Pancreas (tissue), 10 donors: ENCODE measurements at regions of chr17 and their contacts with region 1.

Region 1: DNA sequence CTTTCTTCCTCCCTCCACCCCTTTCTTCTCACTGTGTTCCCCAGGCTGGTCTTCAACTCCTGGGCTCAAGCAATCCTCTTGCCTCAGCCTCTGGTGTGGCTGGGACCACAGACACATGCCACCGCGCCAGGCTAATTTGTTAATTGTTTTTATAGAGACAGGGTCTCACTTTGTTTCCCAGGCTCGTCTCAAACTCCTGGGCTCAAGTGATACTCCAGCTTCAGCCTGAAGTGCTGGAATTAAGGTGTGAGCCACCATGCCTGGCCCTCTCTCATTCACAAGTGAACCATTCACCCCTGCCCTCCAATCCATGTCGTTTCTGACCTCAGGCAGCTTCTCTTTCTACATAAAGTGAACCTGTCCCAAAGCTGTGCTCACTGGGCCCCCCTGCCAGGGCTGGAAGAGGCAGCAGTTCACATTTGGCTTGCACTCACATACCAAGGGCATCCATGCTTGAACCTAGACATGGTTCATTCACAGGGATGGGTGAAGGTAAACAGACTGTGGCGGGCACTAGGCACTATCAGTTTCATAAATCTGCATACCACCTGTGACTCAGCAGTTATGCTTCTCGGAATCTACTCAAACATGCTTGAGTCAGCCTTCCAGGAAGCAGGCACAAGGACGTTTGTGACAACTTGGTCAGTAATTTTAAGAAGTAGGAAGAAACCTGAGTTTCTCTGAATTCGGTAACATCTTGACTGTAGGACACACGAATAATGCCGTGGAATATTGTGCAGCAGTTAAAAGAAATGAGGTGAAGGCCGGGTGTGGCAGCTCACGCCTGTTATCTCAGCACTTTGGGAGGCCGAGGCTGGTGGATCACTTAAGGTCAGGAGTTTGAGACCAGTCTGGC is 6.0 kb upstream of the RNF213 start:
- DNase-seq: peak in 4 of 6 donors; percentile 28 to 80 (median 62)
- ATAC-seq: peak; percentile 44 to 90 (median 80)
- H3K4me3 ChIP-seq: no peak overlapping the region
- H3K27ac ChIP-seq: peak overlapping the region; percentile 26 to 80 (median 52)
- H3K4me1 ChIP-seq: peaks cover 0 to 19% (median 0%) of the 10 kb centered on the region in 3 donors
- H3K27me3 ChIP-seq: no peaks in the 10 kb centered on the region
- CTCF ChIP-seq: no peak

Region 2: GRCh38 chr17:80082403-80083135 is 172.1 kb before region 1 on chr17:
- intact Hi-C with region 1: loop called in 1 of 3 experiments (anchors 5 kb)
- DNase-seq: peak; percentile 49 to 76 (median 68)
- ATAC-seq: peak; percentile 60 to 94 (median 86)
- H3K4me3 ChIP-seq: no peak overlapping the region
- H3K27ac ChIP-seq: no peak overlapping the region
- H3K4me1 ChIP-seq: peaks cover 0 to 3% (median 0%) of the 10 kb centered on the region in 3 donors
- H3K27me3 ChIP-seq: no peaks in the 10 kb centered on the region
- CTCF ChIP-seq: peak; percentile 65 to 77 (median 70)

Region 3: DNA sequence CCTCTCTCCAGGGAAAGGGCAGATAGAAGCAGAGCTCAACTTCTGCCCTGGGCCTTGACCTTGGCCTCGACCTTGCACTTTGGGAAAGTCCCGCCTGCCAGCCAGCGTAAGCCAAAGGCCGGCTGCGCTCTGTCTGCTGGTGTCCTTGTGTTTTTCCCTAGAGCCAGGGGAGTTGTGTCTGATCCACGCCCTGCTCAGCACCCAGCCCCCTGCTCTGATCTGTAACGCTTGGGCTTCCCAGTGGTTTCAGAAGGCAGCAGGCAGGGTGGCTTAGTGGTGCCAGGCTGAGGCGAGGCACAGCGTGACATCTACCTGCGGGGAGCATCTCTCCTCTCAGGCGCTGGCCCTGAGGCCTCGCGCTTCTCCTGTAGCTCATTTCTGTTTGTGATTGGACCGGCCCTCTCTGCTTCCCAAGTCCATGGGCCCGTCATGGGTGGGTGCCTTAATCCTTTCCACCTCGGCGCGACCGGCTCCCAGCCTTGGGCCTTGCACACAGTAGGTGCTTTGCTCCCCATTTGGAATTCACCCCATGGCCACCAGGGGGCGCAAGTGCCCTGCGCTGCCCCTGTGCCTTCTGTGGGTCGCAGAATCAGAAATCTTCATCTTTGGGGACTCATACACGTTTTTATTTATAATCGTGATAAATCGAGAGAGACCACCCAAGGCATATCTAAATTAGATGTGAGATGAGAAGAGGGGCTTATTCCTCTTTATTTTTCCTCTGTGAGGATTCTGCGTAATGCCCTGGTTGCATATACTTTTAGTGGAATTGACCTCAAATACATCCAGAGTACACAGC is 58.7 kb before region 1 on chr17:
- intact Hi-C with region 1: loop called in 1 of 3 experiments (anchors 10 kb)
- DNase-seq: peak in 1 of 6 donors; percentile 46
- ATAC-seq: peak in 1 of 4 donors; percentile 29
- H3K4me3 ChIP-seq: no peak overlapping the region
- H3K27ac ChIP-seq: no peak overlapping the region
- H3K4me1 ChIP-seq: no peaks in the 10 kb centered on the region
- H3K27me3 ChIP-seq: no peaks in the 10 kb centered on the region
- CTCF ChIP-seq: peak; percentile 50 to 81 (median 70)

Region 4: DNA sequence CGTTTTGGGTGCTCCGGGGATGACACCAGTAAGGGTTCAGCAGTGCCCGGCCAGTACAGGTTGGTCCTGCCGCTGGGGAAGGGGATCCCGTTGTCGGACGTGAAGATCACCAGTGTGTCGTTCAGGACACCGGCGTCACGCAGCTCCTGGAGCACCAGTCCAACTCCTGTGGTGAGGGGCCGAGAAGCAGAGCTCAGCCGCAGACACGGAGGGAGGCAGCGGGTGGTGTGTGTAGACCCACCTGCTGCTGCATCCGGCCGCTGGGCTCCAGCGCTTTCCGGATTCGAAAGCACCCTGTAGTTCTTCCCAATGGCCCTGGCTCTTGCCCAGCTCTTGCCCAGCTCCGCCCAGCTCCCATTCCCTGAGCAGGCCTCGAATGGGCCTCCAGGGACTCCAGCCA is 42.5 kb before region 1 on chr17:
- intact Hi-C with region 1: no loop called
- DNase-seq: peak in 2 of 6 donors; percentile 24 to 69
- ATAC-seq: no peak
- H3K4me3 ChIP-seq: no peak overlapping the region
- H3K27ac ChIP-seq: no peak overlapping the region
- H3K4me1 ChIP-seq: no peaks in the 10 kb centered on the region
- H3K27me3 ChIP-seq: no peaks in the 10 kb centered on the region
- CTCF ChIP-seq: no peak